OCI-LY7 (cell line): ENCODE measurements at regions of chr3 and their contacts with region 1.

Region 1: DNA sequence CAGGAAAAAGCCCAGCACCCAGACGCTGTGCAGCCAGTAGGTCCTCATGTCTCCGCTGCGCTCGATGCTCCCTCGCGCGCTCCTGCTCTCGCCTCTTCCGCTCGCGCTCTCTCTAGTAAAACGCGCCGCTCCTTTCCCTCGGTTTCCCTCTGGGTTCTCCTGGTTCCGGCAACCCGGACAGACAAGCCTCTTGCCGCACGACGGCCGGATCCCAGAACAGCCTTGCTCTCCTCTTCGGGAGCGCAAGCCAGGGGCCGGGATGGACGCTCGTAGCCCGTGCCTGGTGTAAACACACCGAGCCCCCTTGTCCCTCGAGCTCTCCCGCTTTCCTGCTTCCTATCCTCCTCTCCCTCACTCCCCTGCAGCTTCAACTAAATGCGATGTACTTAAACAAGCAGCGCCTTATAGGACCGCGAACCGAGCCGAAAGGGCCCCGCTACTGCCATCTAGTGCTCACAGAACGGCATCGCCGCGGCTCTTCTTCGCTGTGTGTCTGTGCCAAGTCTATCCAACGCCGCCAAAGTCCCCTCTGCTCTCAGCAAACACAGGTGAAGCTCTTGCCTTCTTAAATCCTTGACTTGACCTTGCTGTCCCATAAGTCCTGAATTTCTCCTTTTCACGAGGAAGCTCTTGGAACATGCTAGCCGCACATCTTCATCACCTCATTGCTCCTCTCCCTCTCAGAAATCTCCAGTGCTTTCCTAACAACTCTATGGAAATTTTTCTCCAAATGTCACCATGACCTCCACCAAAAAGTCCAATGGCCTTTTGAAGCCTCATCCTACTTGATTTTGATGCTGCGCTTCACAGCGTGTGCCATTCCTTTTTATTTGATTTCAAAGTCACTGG is 1037.2 kb downstream of the IGSF11 start:
- DNase-seq: peak; percentile 80
- H3K4me3 ChIP-seq: peak overlapping the region; percentile 67
- H3K27ac ChIP-seq: no peak overlapping the region
- H3K4me1 ChIP-seq: no peaks in the 10 kb centered on the region
- CTCF ChIP-seq: peak; percentile 87

Region 2: DNA sequence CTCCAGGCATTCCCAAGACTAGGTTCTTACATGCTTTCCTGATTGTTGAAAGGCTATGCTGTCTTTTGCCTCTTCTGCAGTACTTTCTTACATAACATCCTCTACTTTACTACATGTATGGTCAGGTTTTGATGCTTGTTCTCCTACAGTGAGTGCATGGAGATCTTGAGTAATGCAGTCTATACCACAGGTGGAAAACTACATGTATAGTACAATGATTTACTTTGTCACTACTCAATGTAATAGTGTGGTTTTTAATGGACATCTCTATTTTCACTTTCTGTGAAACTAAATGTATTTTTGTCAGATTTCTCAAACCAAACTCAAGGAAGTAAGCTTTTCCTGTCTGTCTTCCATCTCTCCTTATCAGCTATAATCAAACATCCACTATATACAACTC is 630.9 kb before region 1 on chr3:
- CTCF ChIA-PET with region 1: no interaction called
- POLR2A ChIA-PET with region 1: no interaction called
- intact Hi-C with region 1: no loop called
- DNase-seq: no peak
- H3K4me3 ChIP-seq: no peak overlapping the region
- H3K27ac ChIP-seq: no peak overlapping the region
- H3K4me1 ChIP-seq: no peaks in the 10 kb centered on the region
- CTCF ChIP-seq: no peak

Region 3: DNA sequence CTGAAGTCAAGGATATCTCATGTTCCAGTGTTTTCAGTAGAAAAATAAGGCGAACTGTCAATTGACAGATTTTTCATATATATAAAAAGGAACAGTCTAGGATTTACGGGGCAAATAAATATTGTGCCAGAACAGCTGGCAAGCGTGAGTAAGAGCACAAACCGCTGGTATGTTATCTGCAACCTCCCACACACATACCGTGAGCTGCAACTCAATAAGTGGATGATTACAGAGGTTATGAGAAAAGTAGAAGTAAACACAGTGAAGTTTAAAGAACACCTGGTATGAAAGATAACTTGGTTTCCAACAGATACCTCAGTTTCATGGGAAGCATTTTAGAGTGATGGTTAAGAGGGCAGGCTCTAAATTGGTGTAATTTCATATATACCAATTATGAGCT is 554.4 kb before region 1 on chr3:
- CTCF ChIA-PET with region 1: no interaction called
- POLR2A ChIA-PET with region 1: no interaction called
- intact Hi-C with region 1: no loop called
- DNase-seq: no peak
- H3K4me3 ChIP-seq: no peak overlapping the region
- H3K27ac ChIP-seq: no peak overlapping the region
- H3K4me1 ChIP-seq: no peaks in the 10 kb centered on the region
- CTCF ChIP-seq: no peak

Region 4: GRCh38 chr3:117603097-117603496 is 394.3 kb before region 1 on chr3:
- CTCF ChIA-PET with region 1: no interaction called
- POLR2A ChIA-PET with region 1: no interaction called
- intact Hi-C with region 1: loop called (anchors 5 kb)
- DNase-seq: peak; percentile 52
- H3K4me3 ChIP-seq: no peak overlapping the region
- H3K27ac ChIP-seq: peak overlapping the region; percentile 40
- H3K4me1 ChIP-seq: peaks cover 26% of the 10 kb centered on the region
- CTCF ChIP-seq: no peak

Region 5: GRCh38 chr3:117719316-117719926 is 278.0 kb before region 1 on chr3:
- CTCF ChIA-PET with region 1: no interaction called
- POLR2A ChIA-PET with region 1: interaction called, 4 read pairs
- intact Hi-C with region 1: loop called (anchors 2 kb)
- DNase-seq: peak; percentile 57
- H3K4me3 ChIP-seq: peak overlapping the region; percentile 9
- H3K27ac ChIP-seq: peak overlapping the region; percentile 78
- H3K4me1 ChIP-seq: peaks cover 56% of the 10 kb centered on the region
- CTCF ChIP-seq: peak; percentile 93

Region 6: DNA sequence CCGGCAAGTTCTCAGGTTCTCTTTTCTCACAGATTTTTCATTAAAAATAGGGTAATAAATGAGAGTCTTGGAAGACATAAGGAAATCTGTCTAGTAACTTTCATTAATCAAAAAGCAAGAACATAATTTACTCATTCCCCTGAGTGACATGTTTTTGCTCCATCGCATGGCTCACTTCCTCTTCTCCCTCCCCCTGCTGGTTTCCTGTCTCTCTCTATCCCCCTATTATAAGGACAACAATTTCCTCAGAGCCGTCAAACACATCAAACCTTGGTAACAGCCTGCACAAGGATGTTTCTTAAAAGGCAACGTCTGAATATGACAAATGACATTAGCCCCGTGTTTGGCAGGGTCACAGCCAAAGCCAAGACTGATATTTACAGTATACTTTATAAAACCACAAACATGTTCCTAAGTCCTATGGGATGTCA is 112.4 kb before region 1 on chr3:
- CTCF ChIA-PET with region 1: no interaction called
- POLR2A ChIA-PET with region 1: no interaction called
- intact Hi-C with region 1: loop called (anchors 5 kb)
- DNase-seq: peak; percentile 35
- H3K4me3 ChIP-seq: no peak overlapping the region
- H3K27ac ChIP-seq: no peak overlapping the region
- H3K4me1 ChIP-seq: peaks cover 16% of the 10 kb centered on the region
- CTCF ChIP-seq: no peak